AG04449 (cell line): ENCODE measurements at regions of chr1 and their contacts with region 1.

Region 1: DNA sequence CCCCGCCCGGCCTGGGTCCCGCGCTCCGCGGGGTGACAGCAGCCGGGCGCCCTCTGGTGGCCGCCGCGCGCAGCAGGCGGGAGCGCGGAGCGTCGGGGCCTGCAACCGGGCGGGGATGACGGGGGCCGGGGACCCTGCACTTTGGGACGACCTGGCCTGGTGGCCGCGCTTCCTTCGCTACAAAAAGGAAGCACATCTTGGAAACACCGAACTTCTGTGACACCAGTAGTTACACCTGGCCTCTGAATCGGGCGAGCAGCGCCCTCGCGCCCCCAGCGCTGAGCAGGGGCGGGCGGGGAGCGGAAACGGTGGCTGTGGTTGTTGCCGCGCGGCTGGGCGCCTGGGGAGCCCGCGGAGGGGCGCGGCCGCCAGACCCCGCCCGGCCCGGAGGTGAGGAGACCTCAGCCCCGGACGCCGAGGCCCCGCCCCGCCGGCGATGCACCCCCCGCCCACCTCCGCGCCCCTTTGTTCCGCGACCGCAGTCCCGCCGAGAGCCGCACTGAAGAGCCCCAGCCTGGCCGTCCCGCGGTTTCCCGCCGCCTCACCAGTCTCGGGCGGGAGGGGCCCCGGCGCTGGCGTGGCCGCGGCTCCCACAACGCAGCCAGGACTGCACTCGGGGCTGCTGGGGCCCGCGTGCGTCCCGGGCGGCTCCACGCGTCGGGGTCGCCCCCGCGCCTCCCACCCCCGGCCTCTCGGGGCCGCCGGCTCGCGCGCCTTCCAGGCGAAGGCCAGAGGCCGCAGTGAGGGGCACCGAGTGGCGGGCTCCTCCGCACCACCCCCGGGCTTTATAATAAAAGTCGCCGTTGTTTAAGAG is 59.3 kb downstream of the H3-3A start:
- DNase-seq: no peak
- H3K4me3 ChIP-seq: peak overlapping the region; percentile 70
- CTCF ChIP-seq: peak; percentile 66

Region 2: DNA sequence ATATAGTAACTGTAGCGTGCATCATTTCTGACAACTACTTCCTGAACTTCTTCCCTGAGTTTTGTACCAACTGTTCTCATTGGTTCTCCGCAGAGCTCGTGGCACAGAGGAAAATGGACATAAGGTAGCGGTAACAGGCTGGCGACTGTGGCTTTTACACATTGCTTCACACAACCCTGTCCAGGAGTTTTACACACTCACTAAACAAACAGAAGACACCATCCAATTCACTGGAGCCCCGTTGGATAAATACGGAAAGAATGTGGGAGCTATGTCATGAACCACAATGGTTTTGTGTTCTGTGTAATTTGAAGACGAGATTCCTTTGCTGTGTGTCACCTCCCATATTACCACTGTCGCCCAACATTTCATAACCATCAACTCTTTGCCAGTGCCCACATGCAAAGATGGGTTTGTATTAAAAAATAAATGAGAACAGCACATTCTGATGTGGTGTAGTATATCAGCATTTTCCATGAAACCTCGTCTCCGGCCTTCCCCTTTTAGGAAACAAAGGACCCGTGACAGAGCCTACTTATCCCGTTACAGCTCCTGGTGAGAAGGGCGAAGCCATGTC is 421.5 kb before region 1 on chr1:
- CTCF ChIA-PET with region 1: no interaction called
- POLR2A ChIA-PET with region 1: no interaction called
- DNase-seq: peak; percentile 98
- H3K4me3 ChIP-seq: peak overlapping the region; percentile 7
- CTCF ChIP-seq: no peak

Region 3: GRCh38 chr1:225950905-225951497 is 170.8 kb before region 1 on chr1:
- CTCF ChIA-PET with region 1: no interaction called
- POLR2A ChIA-PET with region 1: no interaction called
- DNase-seq: no peak
- H3K4me3 ChIP-seq: no peak overlapping the region
- CTCF ChIP-seq: no peak

Region 4: GRCh38 chr1:226069811-226070489 is 51.8 kb before region 1 on chr1:
- CTCF ChIA-PET with region 1: interaction called, 96 read pairs
- POLR2A ChIA-PET with region 1: no interaction called
- DNase-seq: no peak
- H3K4me3 ChIP-seq: no peak overlapping the region
- CTCF ChIP-seq: no peak

Region 5: GRCh38 chr1:226109829-226110248 is 12.0 kb before region 1 on chr1:
- CTCF ChIA-PET with region 1: interaction called, 85 read pairs
- POLR2A ChIA-PET with region 1: no interaction called
- DNase-seq: no peak
- H3K4me3 ChIP-seq: peak overlapping the region; percentile 56
- CTCF ChIP-seq: no peak

Region 6: DNA sequence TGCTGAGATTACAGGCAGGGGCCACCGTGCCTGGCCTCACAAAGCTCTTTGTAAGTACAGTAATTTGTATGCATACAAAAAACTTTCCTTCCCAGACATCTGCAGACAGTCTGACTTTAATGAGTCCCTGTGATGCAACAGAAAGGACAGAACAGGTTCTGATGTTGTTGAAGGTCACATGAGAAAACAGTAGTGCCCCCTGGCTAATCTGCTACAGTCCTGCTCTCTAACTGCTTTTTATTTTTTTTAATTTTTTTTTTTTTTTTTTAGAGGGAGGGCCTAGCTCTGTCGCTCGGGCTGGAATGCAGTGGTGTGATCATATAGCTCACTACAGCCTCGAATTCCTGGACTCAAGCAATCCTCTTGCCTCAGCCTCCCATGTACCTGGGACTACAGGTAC is 28.0 kb after region 1 on chr1:
- CTCF ChIA-PET with region 1: interaction called, 22 read pairs
- POLR2A ChIA-PET with region 1: no interaction called
- DNase-seq: no peak
- H3K4me3 ChIP-seq: no peak overlapping the region
- CTCF ChIP-seq: no peak

Region 7: GRCh38 chr1:226162898-226163297 is 41.1 kb after region 1 on chr1:
- CTCF ChIA-PET with region 1: interaction called, 25 read pairs
- POLR2A ChIA-PET with region 1: no interaction called
- DNase-seq: no peak
- H3K4me3 ChIP-seq: no peak overlapping the region
- CTCF ChIP-seq: no peak

Region 8: DNA sequence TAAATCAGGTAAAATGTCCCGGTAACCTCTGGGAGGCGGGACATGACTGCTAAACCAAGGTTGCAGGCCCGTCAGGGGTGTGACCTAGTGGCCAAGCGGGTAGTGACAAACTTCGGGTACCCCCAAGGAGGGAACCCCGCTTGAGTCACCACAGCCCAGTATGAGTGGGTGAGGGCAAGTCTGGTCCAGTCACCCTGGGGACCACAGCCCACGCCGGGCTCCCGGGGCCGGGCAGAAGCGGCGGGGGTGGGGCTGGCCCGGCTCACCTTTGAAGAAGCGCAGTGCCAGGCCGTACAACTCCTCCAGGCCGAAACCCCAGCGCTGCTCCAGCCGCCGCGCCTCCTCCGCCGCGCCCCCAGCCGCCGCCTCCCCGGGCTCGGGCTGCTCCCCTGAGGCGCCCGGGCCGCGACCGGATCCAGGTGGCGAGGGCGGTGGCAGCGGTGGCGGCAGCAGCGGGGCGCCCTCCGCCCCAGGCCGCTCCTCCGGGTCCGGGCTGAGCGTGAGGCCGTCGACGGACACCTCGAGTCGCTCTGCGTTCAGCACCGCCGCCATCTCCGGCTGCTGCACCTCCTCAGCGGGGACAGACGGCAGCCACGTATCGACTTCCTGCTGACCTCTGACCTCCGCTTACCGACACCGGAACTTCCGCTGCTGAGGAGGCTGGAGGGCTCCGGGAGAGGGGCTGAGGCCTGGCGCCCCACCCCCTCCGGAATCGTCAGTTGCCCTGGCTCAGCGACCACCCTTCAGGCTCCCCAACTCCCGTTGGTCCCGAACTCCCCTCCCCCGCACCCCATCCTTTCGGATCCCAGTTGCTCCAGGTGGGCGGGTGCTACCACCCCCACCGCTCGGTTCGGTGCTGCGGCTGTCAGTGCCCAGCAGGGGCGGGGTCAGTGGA is 64.6 kb after region 1 on chr1 and contains the start of gene ACBD3:
- CTCF ChIA-PET with region 1: interaction called, 27 read pairs
- POLR2A ChIA-PET with region 1: no interaction called
- DNase-seq: peak; percentile 26
- H3K4me3 ChIP-seq: peak within 1 kb of the TSS; percentile 97
- CTCF ChIP-seq: peak; percentile 19

Region 9: DNA sequence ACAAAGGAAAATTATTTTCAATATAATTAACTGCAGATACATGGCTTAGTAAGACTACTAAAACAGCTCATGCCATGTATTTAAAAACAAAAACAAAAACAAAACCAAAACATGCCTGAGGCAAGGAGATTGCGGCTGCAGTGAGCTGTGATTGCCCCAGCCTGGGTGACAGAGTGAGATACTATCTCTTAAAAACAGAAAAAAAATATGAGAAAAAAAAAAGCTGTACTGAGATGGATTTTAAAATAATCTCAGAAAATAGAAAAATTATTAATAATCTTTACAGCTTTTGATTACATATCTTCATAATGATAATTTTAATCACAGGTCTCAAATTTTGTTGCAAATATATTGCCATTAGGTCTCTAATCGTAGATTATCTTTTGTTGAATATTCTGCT is 211.2 kb after region 1 on chr1:
- CTCF ChIA-PET with region 1: interaction called, 27 read pairs
- POLR2A ChIA-PET with region 1: no interaction called
- DNase-seq: no peak
- H3K4me3 ChIP-seq: no peak overlapping the region
- CTCF ChIP-seq: no peak